CD4-positive, alpha-beta T cell (primary cell): ENCODE measurements at regions of chr1 and their contacts with region 1.

Region 1: DNA sequence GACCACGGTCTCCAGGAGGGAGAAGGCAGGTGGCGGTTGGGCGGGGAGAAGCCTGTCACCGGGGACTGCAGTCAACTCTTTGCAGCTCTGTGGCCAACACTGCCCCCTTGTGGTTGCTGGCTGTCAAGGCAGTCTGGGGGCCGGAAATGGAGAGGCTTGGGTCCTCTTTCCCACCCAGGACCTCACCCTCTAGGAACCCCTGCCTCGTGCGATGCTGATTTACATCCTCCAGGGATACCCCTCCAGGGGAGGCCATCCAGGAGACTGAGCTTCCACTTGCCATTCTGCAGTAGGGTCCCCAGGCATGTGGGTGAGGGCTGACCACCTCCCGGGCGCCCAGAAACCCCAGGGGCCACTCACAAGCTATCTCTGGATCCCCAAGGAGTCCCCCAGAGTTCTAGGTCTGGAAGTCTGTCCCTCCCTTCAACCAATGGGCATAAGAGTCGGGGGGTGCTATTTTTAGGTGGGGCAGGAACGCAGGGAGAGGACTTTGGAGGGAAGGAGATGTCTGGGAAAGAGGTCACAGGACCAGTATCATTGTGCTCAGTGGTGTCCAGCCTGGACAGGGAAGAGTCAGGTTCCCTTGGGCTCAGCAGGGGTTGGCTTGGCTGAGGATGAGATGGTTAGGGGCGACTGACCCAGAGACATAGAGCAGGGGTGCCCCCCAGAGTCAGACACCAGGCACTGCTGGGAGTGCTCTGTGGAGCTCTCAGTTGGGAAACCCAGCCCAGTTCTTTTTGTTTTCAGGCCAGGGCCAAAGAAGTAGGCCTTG is 7.1 kb upstream of the GPR61 start:
- DNase-seq: peak; percentile 83 to 95 (median 92)
- ATAC-seq: peak; percentile 92
- H3K4me3 ChIP-seq: peak overlapping the region; percentile 37
- H3K4me3 Mint-ChIP-seq: peak overlapping the region; percentile 84
- H3K27ac ChIP-seq: no peak overlapping the region
- H3K27ac Mint-ChIP-seq: peak overlapping the region; percentile 29
- H3K4me1 ChIP-seq: peaks cover 35% of the 10 kb centered on the region
- H3K4me1 Mint-ChIP-seq: peaks cover 35% of the 10 kb centered on the region
- H3K27me3 ChIP-seq: no peaks in the 10 kb centered on the region
- H3K27me3 Mint-ChIP-seq: no peaks in the 10 kb centered on the region
- CTCF ChIP-seq: peak; percentile 78

Region 2: GRCh38 chr1:108828022-108828961 is 704.3 kb before region 1 on chr1:
- CTCF ChIA-PET with region 1: no interaction called
- POLR2A ChIA-PET with region 1: no interaction called
- intact Hi-C with region 1: loop called in 1 of 2 experiments (anchors 5 kb)
- DNase-seq: peak; percentile 46 to 83 (median 60)
- ATAC-seq: peak; percentile 68
- H3K4me3 ChIP-seq: no peak overlapping the region
- H3K4me3 Mint-ChIP-seq: no peak overlapping the region
- H3K27ac ChIP-seq: no peak overlapping the region
- H3K27ac Mint-ChIP-seq: no peak overlapping the region
- H3K4me1 ChIP-seq: peaks cover 4% of the 10 kb centered on the region
- H3K4me1 Mint-ChIP-seq: no peaks in the 10 kb centered on the region
- H3K27me3 ChIP-seq: no peaks in the 10 kb centered on the region
- H3K27me3 Mint-ChIP-seq: no peaks in the 10 kb centered on the region
- CTCF ChIP-seq: peak; percentile 78

Region 3: GRCh38 chr1:109075531-109076490 is 456.7 kb before region 1 on chr1 and contains the start of gene TAF13:
- CTCF ChIA-PET with region 1: no interaction called
- POLR2A ChIA-PET with region 1: no interaction called
- intact Hi-C with region 1: no loop called
- DNase-seq: peak; percentile 69 to 93 (median 82)
- ATAC-seq: peak; percentile 94
- H3K4me3 ChIP-seq: peak within 1 kb of the TSS; percentile 88
- H3K4me3 Mint-ChIP-seq: peak within 1 kb of the TSS; percentile 95
- H3K27ac ChIP-seq: peak within 1 kb of the TSS; percentile 92 to 94
- H3K27ac Mint-ChIP-seq: peak within 1 kb of the TSS; percentile 99
- H3K4me1 ChIP-seq: peaks cover 12% of the 10 kb centered on the region
- H3K4me1 Mint-ChIP-seq: peaks cover 14% of the 10 kb centered on the region
- H3K27me3 ChIP-seq: no peaks in the 10 kb centered on the region
- H3K27me3 Mint-ChIP-seq: no peaks in the 10 kb centered on the region
- CTCF ChIP-seq: no peak
- total RNA-seq, gene TAF13: 25.9 to 26.5 TPM

Region 4: DNA sequence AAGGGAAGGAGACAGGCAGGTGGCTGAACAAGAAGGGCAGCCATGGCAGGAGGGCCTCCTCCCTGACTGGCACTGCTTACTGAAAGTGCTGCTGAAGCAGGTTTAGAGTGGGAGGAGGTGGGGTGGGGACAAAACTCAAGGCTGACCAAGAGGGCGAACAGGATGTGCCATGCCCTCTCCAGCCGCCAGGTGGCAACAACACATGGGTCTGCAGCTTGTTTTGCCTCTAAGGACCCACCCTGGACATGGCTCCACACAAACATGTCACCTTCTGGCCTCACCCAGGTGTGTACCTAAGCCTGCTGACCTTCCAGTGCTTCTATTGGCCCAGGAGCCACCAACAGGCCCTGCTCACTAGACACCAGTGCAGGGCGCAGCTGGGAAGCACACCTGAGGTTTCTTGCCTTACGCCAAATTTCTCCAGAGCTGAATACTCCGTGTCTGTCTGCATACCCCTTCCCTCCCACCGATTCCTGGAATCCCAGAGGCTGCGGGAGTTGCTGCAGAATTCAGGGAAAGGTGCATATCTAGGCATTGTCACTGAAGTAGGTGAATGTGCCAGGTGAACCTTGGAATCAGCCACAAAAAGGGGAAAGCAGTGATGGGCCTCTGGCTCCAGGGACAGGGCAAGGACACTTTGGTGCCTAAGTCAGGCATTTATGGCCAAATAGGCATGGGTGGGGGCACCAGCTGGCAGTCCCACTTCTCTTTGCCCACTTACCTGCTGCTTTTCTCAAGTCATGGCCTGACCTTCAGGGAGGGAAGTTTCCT is 254.9 kb before region 1 on chr1:
- CTCF ChIA-PET with region 1: interaction called, 26 read pairs
- POLR2A ChIA-PET with region 1: interaction called, 5 read pairs
- intact Hi-C with region 1: loop called (anchors 1 to 2 kb)
- DNase-seq: peak; percentile 34 to 76 (median 48)
- ATAC-seq: peak; percentile 78
- H3K4me3 ChIP-seq: no peak overlapping the region
- H3K4me3 Mint-ChIP-seq: no peak overlapping the region
- H3K27ac ChIP-seq: no peak overlapping the region
- H3K27ac Mint-ChIP-seq: no peak overlapping the region
- H3K4me1 ChIP-seq: peaks cover 19% of the 10 kb centered on the region
- H3K4me1 Mint-ChIP-seq: peaks cover 4% of the 10 kb centered on the region
- H3K27me3 ChIP-seq: no peaks in the 10 kb centered on the region
- H3K27me3 Mint-ChIP-seq: no peaks in the 10 kb centered on the region
- CTCF ChIP-seq: peak; percentile 79

Region 5: DNA sequence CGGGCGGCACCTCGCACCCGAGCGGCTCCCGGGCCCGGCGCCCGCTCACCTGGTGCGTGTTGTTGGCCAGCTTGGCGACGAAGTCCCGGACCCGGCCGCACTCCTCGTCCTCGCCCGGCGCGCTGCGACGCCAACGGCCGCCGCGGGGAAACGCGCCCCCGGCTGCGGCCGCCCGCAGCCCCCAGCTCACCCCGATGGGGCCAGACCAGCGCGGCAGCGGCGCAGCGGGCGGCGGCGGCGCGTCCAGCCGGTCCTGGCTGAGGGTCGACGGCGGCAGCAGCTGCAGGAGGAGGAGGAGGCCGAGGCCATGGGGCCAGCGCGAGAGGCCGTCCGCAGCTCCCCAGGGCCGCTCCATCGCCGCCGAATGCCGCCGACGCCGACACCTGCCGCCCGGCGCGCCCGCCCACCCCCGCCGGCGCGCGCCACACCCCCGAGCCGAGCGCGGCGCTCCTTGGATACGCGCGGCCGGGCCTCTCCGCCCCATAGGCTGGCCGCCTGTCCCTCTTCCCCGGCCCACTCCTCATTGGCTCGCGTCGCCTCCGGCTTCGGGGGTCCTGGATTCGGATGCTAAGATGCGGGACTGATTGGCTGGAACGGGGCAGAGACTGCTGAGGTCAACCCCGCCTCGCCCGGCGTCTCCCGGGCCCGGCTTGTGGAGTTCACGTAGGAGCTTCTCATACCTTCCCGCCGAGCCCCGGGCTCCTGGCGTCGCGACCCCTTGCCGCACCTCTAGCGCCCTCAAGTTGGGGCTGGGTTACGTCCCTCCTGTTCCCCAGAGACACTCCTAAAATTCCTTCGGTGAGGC is 134.8 kb before region 1 on chr1 and contains the start of gene SORT1:
- CTCF ChIA-PET with region 1: interaction called, 20 read pairs
- POLR2A ChIA-PET with region 1: interaction called, 3 read pairs
- intact Hi-C with region 1: loop called in 1 of 2 experiments (anchors 2 kb)
- DNase-seq: peak in 13 of 14 experiments; percentile 5 to 74 (median 32)
- ATAC-seq: peak; percentile 91
- H3K4me3 ChIP-seq: peak within 1 kb of the TSS; percentile 46
- H3K4me3 Mint-ChIP-seq: peak within 1 kb of the TSS; percentile 89
- H3K27ac ChIP-seq: no peak within 1 kb of the TSS
- H3K27ac Mint-ChIP-seq: no peak within 1 kb of the TSS
- H3K4me1 ChIP-seq: peaks cover 16% of the 10 kb centered on the region
- H3K4me1 Mint-ChIP-seq: peaks cover 16% of the 10 kb centered on the region
- H3K27me3 ChIP-seq: peaks cover 35 to 40% of the 10 kb centered on the region in 2 experiments
- H3K27me3 Mint-ChIP-seq: peaks cover 47% of the 10 kb centered on the region
- CTCF ChIP-seq: no peak
- total RNA-seq, gene SORT1: 0.22 to 0.73 TPM

Region 6: GRCh38 chr1:109493805-109494539 is 38.6 kb before region 1 on chr1 and contains the start of gene CYB561D1:
- CTCF ChIA-PET with region 1: interaction called, 474 read pairs
- POLR2A ChIA-PET with region 1: interaction called, 318 read pairs
- intact Hi-C with region 1: loop called (anchors 1 kb)
- DNase-seq: peak; percentile 78 to 94 (median 88)
- ATAC-seq: peak; percentile 90
- H3K4me3 ChIP-seq: peak within 1 kb of the TSS; percentile 100
- H3K4me3 Mint-ChIP-seq: peak within 1 kb of the TSS; percentile 97
- H3K27ac ChIP-seq: peak within 1 kb of the TSS; percentile 59 to 66
- H3K27ac Mint-ChIP-seq: peak within 1 kb of the TSS; percentile 88
- H3K4me1 ChIP-seq: peaks cover 62% of the 10 kb centered on the region
- H3K4me1 Mint-ChIP-seq: peaks cover 54% of the 10 kb centered on the region
- H3K27me3 ChIP-seq: no peaks in the 10 kb centered on the region
- H3K27me3 Mint-ChIP-seq: no peaks in the 10 kb centered on the region
- CTCF ChIP-seq: peak; percentile 92
- total RNA-seq, gene CYB561D1: 12.0 to 15.0 TPM

Region 7: DNA sequence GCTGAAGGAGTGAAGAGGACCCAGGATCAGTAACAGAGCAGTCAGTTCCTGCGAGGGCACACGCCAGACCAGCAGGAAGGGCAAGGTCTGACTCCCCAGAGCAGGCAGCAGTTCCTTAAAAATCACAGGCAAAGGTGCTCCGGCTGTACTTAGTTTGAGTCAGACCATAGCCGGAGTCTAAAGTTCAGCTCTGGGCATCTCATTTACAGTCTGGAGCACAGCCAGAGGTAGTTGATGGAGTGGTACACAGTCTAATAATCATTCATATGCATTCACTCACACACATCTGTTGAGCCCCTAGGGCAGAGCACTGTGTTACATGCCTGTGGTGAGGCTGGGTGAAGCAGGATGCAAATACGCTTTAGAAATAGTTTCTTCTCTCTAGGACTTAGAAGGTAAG is 15.7 kb before region 1 on chr1:
- CTCF ChIA-PET with region 1: interaction called, 8 read pairs
- POLR2A ChIA-PET with region 1: interaction called, 318 read pairs
- intact Hi-C with region 1: loop called in 1 of 2 experiments (anchors 1 kb)
- DNase-seq: no peak
- ATAC-seq: no peak
- H3K4me3 ChIP-seq: no peak overlapping the region
- H3K4me3 Mint-ChIP-seq: no peak overlapping the region
- H3K27ac ChIP-seq: no peak overlapping the region
- H3K27ac Mint-ChIP-seq: no peak overlapping the region
- H3K4me1 ChIP-seq: no peaks in the 10 kb centered on the region
- H3K4me1 Mint-ChIP-seq: peaks cover 4% of the 10 kb centered on the region
- H3K27me3 ChIP-seq: no peaks in the 10 kb centered on the region
- H3K27me3 Mint-ChIP-seq: no peaks in the 10 kb centered on the region
- CTCF ChIP-seq: no peak